AG04450 (cell line): ENCODE measurements at regions of chr5 and their contacts with region 1.

Region 1: DNA sequence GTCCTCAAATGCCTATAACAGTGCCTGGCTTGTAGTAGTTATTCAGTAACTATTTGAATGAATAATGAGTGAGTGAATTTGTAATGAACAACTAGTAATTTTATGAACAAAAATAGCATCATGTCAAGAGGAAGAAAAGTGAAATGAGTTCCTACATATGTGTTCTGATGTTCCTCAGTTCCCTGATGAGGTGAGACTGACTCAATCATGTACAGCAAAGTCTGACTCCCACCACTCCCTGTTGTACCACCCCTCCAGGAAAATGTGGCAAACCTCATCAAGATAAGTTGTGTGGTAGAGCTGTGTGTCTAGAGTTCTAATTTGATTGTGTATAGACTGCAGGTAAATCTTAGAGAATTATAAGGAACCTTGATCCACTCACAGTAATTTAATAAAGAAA is 201.6 kb downstream of the GOLPH3 start:
- DNase-seq: no peak
- H3K4me3 ChIP-seq: no peak overlapping the region
- H3K27ac ChIP-seq: no peak overlapping the region
- H3K27me3 ChIP-seq: peaks cover 2% of the 10 kb centered on the region
- CTCF ChIP-seq: no peak

Region 2: GRCh38 chr5:31948009-31948408 is 24.5 kb before region 1 on chr5:
- CTCF ChIA-PET with region 1: no interaction called
- POLR2A ChIA-PET with region 1: interaction called, 12 read pairs
- DNase-seq: no peak
- H3K4me3 ChIP-seq: no peak overlapping the region
- H3K27ac ChIP-seq: no peak overlapping the region
- H3K27me3 ChIP-seq: no peaks in the 10 kb centered on the region
- CTCF ChIP-seq: no peak

Region 3: GRCh38 chr5:31986101-31986500 is 13.5 kb after region 1 on chr5:
- CTCF ChIA-PET with region 1: interaction called, 10 read pairs
- POLR2A ChIA-PET with region 1: no interaction called
- DNase-seq: no peak
- H3K4me3 ChIP-seq: no peak overlapping the region
- H3K27ac ChIP-seq: no peak overlapping the region
- H3K27me3 ChIP-seq: peaks cover 3% of the 10 kb centered on the region
- CTCF ChIP-seq: no peak